IMR-90 (cell line): ENCODE measurements at regions of chr7 and their contacts with region 1.

Region 1: DNA sequence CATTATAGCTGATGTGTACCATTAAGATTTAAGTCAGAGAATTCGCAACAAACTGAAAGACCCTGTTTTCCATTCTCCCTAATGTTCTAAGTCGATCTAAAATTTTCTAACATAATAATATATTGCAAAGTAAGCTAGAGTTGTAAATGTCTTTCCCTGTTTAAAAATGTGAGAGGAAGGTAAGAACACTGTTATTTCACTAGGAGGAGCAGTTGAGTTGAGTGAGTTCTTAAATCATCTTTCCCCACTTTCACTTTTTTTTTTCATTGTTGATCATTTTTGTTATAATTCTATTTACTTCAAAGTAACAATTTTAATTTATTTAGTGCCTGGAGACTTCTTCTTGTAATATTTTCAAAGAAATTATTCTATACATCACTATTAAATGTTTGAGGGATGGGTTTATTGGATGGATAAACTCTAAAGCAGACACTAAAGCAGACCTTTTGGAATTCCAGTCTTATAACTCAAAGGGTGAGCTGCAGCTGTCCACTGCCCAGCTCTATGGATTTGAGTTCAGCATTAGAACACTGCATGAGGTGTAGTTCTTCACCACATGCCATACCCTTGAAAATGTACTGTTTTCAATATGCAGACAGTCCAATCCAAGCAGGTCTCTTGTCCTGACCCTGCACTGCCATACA is 181.3 kb upstream of the FZD1 start:
- DNase-seq: peak; percentile 62
- ATAC-seq: peak; percentile 43; the same call in 1 of the 2 replicates
- H3K4me3 ChIP-seq: no peak overlapping the region
- H3K27ac ChIP-seq: peak overlapping the region; percentile 13; the same call in 1 of the 2 replicates
- H3K4me1 ChIP-seq: 0 out of 2 replicates have a peak, but pooled peaks cover 2% of the 10 kb centered on the region
- H3K27me3 ChIP-seq: no peaks in the 10 kb centered on the region
- CTCF ChIP-seq: peak; percentile 70
- POLR2A ChIP-seq: no peak
- RAD21 ChIP-seq: peak; percentile 69

Region 2: DNA sequence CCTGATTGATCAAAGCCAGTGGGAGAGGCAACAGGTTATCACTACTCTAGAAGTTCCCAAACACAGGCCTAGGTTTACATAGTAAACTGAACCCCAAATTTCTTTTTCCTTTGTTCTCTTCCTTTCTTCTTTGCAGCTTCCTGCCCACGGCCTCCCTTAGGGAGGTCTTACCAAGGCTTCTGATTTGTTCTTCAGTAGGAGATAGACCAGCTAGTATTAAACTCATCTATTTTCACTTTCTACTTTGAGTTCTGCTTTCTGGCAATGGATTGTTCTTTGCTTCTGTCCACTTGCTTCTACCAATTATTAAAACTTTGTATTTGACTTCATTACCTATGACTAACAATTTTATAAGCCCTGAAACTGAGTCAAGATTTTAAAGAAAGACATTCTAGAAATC is 69.9 kb before region 1 on chr7:
- CTCF ChIA-PET with region 1: no interaction called
- POLR2A ChIA-PET with region 1: no interaction called
- dilution Hi-C with region 1: no loop called
- in situ Hi-C with region 1: no loop called
- intact Hi-C with region 1: no loop called
- DNase-seq: no peak
- ATAC-seq: no peak
- H3K4me3 ChIP-seq: no peak overlapping the region
- H3K27ac ChIP-seq: no peak overlapping the region
- H3K4me1 ChIP-seq: no peaks in the 10 kb centered on the region
- H3K27me3 ChIP-seq: no peaks in the 10 kb centered on the region
- CTCF ChIP-seq: no peak
- POLR2A ChIP-seq: no peak
- RAD21 ChIP-seq: no peak

Region 3: DNA sequence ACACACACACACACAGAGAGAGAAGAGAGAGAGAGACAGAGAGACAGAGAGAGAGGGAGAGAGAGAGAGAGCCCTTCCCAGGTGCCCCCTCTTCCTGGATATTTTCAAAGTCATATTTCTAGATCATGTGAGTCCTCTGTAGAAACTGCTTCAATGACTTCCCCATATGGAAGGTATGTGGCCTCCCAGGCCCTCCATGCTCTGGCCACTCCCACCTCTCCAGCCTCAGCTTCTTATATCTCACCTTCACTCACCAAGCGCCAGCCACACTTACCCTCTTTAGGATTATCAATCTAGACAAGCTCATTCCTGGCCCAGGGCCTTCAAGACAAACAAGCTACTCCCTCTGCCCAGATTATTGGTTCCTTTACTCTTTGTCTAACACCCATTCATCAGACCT is 537.9 kb after region 1 on chr7:
- CTCF ChIA-PET with region 1: no interaction called
- POLR2A ChIA-PET with region 1: no interaction called
- dilution Hi-C with region 1: no loop called
- in situ Hi-C with region 1: loop called (anchors 25 kb)
- intact Hi-C with region 1: loop called (anchors 5 kb)
- DNase-seq: no peak
- ATAC-seq: no peak
- H3K4me3 ChIP-seq: no peak overlapping the region
- H3K27ac ChIP-seq: no peak overlapping the region
- H3K4me1 ChIP-seq: no peaks in the 10 kb centered on the region
- H3K27me3 ChIP-seq: no peaks in the 10 kb centered on the region
- CTCF ChIP-seq: no peak
- POLR2A ChIP-seq: no peak
- RAD21 ChIP-seq: no peak

Region 4: DNA sequence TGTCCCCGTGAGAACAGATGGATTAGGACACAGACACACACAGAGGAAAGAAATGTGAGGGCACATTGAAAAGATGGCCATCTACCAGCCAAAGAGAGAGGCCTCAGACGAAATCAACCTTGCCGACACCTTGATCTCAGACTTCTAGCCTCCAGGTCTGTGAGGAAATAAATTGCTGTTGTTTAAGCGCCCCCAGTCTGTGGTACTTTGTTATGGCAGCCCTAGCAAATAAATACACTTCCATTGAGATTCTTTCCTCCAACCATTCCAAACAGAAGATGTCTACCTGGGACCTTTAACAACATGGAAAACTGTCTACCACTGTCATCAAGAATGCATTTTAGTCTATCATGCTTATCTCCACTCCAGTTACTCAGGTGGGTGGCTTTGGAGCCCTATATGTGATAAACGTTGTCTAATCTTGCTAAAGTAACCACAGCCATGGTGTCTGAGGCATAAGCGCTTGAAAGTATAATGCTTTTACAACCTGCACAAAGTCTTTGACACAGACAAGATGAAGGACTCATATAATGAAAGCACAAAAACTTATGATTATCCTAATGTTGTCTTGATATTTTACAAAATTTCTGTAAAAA is 553.3 kb after region 1 on chr7:
- CTCF ChIA-PET with region 1: no interaction called
- POLR2A ChIA-PET with region 1: no interaction called
- dilution Hi-C with region 1: no loop called
- in situ Hi-C with region 1: no loop called
- intact Hi-C with region 1: loop called (anchors 5 kb)
- DNase-seq: no peak
- ATAC-seq: no peak
- H3K4me3 ChIP-seq: no peak overlapping the region
- H3K27ac ChIP-seq: no peak overlapping the region
- H3K4me1 ChIP-seq: no peaks in the 10 kb centered on the region
- H3K27me3 ChIP-seq: no peaks in the 10 kb centered on the region
- CTCF ChIP-seq: peak; percentile 37
- POLR2A ChIP-seq: no peak
- RAD21 ChIP-seq: peak; percentile 44

Region 5: GRCh38 chr7:91784463-91784862 is 701.5 kb after region 1 on chr7:
- CTCF ChIA-PET with region 1: no interaction called
- POLR2A ChIA-PET with region 1: no interaction called
- dilution Hi-C with region 1: no loop called
- in situ Hi-C with region 1: loop called (anchors 10 kb)
- intact Hi-C with region 1: loop called (anchors 2 kb)
- DNase-seq: peak; percentile 61
- ATAC-seq: peak; percentile 70
- H3K4me3 ChIP-seq: no peak overlapping the region
- H3K27ac ChIP-seq: no peak overlapping the region
- H3K4me1 ChIP-seq: no peaks in the 10 kb centered on the region
- H3K27me3 ChIP-seq: no peaks in the 10 kb centered on the region; the same call in none of the 2 replicates
- CTCF ChIP-seq: peak; percentile 48
- POLR2A ChIP-seq: no peak
- RAD21 ChIP-seq: peak; percentile 62